ENCODE measurements at regions of chr9 and their contacts with region 1.

Region 1: GRCh38 chr9:72864327-72864726 is 88.5 kb downstream of the ALDH1A1 start:
- DNase-seq: no peak
- ATAC-seq: no peak
- H3K4me3 Mint-ChIP-seq: no peak overlapping the region
- H3K27ac Mint-ChIP-seq: no peak overlapping the region
- H3K4me1 Mint-ChIP-seq: no peaks in the 10 kb centered on the region
- H3K27me3 Mint-ChIP-seq: no peaks in the 10 kb centered on the region
- CTCF ChIP-seq: no peak

Region 2: DNA sequence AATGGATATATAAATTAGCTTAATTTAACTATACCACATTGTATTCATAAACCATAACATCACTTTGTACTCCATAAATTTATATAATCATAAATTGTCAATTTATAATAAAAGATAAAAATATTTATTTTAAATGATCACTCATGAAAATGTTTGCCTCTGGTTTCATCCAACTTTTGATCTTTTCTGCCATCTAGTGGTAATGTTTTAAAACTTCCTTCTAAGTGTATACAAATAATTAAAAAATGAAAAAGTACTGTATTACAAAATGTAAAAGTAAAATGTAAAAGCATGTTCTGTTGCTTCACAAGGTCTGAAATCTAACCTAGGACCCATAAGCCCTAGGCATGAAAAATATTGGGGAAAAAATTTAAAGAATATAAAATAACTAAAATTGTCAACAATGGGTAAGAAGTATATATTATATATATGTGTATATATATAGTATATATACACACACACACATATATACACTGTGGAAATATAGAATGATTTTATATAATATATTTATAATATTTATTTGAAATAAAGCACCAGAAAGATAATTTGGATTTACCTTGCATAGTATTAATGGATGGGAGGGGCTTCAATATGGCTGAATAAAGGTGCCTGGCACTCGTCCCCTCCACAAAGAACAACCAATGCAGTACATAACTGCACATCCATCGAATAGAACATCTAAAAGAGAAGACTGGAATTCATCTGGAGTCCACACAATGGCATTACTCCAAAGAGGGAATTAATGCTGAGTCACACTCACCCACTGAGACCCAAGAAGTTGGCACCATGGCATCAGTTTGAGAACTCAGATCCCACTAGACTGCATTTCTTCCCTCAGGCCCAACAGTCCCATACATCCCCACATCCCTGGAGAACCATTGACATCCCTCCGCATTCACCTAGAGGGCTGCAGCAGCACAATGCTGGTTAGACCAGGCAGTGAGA is 319.9 kb after region 1 on chr9:
- CTCF ChIA-PET with region 1: no interaction called
- POLR2A ChIA-PET with region 1: no interaction called
- intact Hi-C with region 1: loop called (anchors 10 kb)
- DNase-seq: no peak
- ATAC-seq: no peak
- H3K4me3 Mint-ChIP-seq: no peak overlapping the region
- H3K27ac Mint-ChIP-seq: no peak overlapping the region
- H3K4me1 Mint-ChIP-seq: peaks cover 15% of the 10 kb centered on the region
- H3K27me3 Mint-ChIP-seq: peaks cover 7% of the 10 kb centered on the region
- CTCF ChIP-seq: peak; percentile 63